ENCODE measurements at regions of chr1 and their contacts with region 1.

Region 1: DNA sequence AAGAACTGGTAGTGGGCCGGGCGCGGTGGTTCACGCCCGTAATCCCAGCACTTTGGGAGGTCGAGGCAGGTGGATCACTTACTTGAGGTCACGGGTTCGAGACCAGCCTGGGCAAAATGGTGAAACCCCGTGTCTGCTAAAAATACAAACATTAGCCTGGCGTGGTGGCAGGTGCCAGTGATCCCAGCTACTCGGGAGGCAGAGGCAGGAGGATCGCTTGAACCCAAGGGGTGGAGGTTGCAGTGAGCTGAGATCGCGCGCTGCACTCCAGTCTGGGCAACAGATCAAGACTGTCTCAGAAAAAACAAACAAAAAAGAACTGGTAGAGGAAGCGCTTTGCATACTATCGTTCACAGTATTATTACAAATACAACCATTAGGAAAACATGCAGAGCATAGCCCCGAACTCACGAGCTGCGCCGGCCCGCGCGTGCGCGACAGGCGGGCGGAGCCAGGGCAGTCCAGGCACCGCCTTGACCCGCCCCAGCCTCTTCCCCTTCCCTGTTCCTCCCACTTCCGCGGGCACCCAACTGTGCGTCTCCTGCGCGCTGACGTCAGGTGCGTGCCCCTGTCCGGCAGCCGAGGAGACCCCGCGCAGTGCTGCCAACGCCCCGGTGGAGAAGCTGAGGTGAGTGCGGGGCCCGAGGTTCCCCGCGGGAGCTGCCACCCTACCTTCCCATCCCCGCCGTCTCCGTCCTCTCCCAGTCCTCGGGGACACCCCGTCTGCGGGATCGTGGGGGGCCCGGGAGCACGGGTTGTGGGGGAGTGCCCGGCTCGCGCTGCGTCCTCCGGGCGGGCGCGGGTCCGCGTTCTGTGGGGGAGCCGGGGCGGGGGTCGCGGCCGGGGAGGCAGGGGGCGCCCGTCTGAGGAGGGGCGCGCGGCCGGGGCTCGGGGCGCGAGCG is at the start of gene CDC42:
- DNase-seq: peak; percentile 96 to 99
- H3K4me3 ChIP-seq: peak within 1 kb of the TSS; percentile 100
- CTCF ChIP-seq: no peak
- POLR2A ChIP-seq: peak in 1 of 2 donors; percentile 92
- total RNA-seq, gene CDC42: 162 to 226 (median 203) TPM

Region 2: GRCh38 chr1:21734526-21734925 is 317.8 kb before region 1 on chr1:
- intact Hi-C with region 1: no loop called
- DNase-seq: no peak
- H3K4me3 ChIP-seq: no peak overlapping the region
- CTCF ChIP-seq: no peak
- POLR2A ChIP-seq: no peak

Region 3: DNA sequence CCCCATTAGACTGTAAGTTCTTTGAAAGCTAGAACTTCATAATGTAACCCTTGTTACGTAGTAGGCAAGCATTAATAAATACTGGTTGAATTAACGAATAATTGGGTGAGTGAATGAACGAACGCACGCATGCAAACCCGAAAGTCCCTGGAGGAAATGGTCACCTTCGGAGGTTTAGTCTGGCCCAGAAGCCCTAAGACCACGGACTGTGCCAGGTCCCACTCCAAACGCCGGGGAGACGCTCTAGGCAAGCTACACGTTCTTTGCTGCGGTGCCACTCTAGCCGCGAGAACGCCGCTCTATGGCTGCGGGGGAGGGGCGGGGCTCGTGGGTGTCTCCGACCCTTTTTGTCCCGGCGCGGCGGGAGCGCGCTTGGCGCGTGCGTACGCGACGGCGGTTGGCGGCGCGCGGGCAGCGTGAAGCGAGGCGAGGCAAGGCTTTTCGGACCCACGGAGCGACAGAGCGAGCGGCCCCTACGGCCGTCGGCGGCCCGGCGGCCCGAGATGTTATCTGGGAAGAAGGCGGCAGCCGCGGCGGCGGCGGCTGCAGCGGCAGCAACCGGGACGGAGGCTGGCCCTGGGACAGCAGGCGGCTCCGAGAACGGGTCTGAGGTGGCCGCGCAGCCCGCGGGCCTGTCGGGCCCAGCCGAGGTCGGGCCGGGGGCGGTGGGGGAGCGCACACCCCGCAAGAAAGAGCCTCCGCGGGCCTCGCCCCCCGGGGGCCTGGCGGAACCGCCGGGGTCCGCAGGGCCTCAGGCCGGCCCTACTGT is 966.9 kb after region 1 on chr1 and contains the start of gene KDM1A:
- intact Hi-C with region 1: loop called (anchors 5 kb)
- DNase-seq: peak; percentile 94 to 99
- H3K4me3 ChIP-seq: peak within 1 kb of the TSS; percentile 85
- CTCF ChIP-seq: no peak
- POLR2A ChIP-seq: peak in 1 of 2 donors; percentile 36
- total RNA-seq, gene KDM1A: 41.5 to 52.0 (median 46.6) TPM